Left ventricle myocardium inferior (tissue), 1 donor: ENCODE measurements at regions of chr3 and their contacts with region 1.

Region 1: GRCh38 chr3:101950510-101950909 is 101.2 kb downstream of the NFKBIZ start:
- DNase-seq: no peak
- H3K4me3 ChIP-seq: no peak overlapping the region
- H3K27ac ChIP-seq: no peak overlapping the region
- H3K4me1 ChIP-seq: no peaks in the 10 kb centered on the region
- H3K27me3 ChIP-seq: no peaks in the 10 kb centered on the region
- CTCF ChIP-seq: no peak

Region 2: GRCh38 chr3:101819758-101820157 is 130.8 kb before region 1 on chr3:
- intact Hi-C with region 1: loop called (anchors 5 kb)
- DNase-seq: no peak
- H3K4me3 ChIP-seq: no peak overlapping the region
- H3K27ac ChIP-seq: no peak overlapping the region
- H3K4me1 ChIP-seq: peaks cover 11% of the 10 kb centered on the region
- H3K27me3 ChIP-seq: no peaks in the 10 kb centered on the region
- CTCF ChIP-seq: no peak

Region 3: DNA sequence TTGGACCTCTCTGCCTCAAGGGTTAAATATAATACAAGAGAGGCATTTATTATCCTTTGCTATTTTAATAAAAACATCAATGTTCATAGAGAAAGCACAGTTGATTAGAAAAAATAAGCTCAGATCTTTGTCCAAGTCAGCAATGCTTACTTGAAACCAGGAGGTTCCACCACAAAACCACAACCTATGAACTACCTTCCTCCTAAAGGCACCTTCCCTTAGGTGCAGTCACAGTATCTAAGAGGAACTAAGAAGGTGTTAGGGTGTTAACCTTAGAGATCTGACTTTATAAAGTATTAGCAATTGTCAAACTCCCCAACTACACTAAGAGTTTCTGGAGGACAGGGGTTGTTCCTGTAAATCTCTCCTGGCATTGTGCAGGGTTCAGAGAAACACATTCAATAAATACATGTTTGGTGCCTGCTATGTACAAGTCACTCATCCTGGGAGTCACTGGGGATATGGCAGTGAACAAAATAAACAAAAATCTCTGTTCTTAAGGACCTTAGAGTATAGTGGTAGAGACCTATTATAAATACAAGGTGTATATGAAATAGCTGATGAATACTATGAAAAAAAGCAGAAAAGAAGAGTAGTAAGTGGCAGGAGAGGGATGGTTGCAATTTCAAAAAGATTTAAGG is 107.4 kb after region 1 on chr3:
- intact Hi-C with region 1: no loop called
- DNase-seq: no peak
- H3K4me3 ChIP-seq: no peak overlapping the region
- H3K27ac ChIP-seq: no peak overlapping the region
- H3K4me1 ChIP-seq: no peaks in the 10 kb centered on the region
- H3K27me3 ChIP-seq: no peaks in the 10 kb centered on the region
- CTCF ChIP-seq: no peak

Region 4: DNA sequence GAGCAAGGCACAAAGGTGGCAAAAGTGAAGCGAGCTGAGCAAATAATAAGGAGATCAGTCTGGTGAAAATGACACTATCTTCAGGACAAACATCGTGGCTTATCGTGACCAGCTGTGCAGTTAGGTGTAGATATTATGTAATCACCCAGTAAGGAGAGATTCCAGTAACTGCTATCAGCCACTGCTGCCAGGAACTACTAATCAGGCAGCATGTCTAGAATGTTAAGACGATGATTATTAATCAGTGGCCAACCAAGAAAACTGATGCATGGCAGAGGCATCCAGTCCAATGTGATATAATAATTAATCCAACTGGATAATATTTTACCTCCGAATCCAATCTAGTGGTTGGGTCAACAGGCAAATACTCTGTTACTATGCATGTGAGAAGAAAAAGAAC is 231.7 kb after region 1 on chr3:
- intact Hi-C with region 1: no loop called
- DNase-seq: no peak
- H3K4me3 ChIP-seq: no peak overlapping the region
- H3K27ac ChIP-seq: peak overlapping the region; percentile 81
- H3K4me1 ChIP-seq: peaks cover 48% of the 10 kb centered on the region
- H3K27me3 ChIP-seq: no peaks in the 10 kb centered on the region
- CTCF ChIP-seq: no peak